ENCODE measurements at regions of chr4 and their contacts with region 1.

Region 1: GRCh38 chr4:88533937-88534750 is 10.6 kb upstream of the PYURF start:
- DNase-seq: no peak
- ATAC-seq: no peak
- H3K4me3 Mint-ChIP-seq: no peak overlapping the region
- H3K27ac Mint-ChIP-seq: no peak overlapping the region
- H3K4me1 Mint-ChIP-seq: peaks cover 8% of the 10 kb centered on the region
- H3K27me3 Mint-ChIP-seq: no peaks in the 10 kb centered on the region
- CTCF ChIP-seq: no peak

Region 2: GRCh38 chr4:88411473-88412096 is 122.6 kb before region 1 on chr4:
- CTCF ChIA-PET with region 1: no interaction called
- POLR2A ChIA-PET with region 1: no interaction called
- intact Hi-C with region 1: no loop called
- DNase-seq: peak; percentile 27
- ATAC-seq: peak; percentile 74
- H3K4me3 Mint-ChIP-seq: no peak overlapping the region
- H3K27ac Mint-ChIP-seq: no peak overlapping the region
- H3K4me1 Mint-ChIP-seq: peaks cover 7% of the 10 kb centered on the region
- H3K27me3 Mint-ChIP-seq: no peaks in the 10 kb centered on the region
- CTCF ChIP-seq: no peak

Region 3: DNA sequence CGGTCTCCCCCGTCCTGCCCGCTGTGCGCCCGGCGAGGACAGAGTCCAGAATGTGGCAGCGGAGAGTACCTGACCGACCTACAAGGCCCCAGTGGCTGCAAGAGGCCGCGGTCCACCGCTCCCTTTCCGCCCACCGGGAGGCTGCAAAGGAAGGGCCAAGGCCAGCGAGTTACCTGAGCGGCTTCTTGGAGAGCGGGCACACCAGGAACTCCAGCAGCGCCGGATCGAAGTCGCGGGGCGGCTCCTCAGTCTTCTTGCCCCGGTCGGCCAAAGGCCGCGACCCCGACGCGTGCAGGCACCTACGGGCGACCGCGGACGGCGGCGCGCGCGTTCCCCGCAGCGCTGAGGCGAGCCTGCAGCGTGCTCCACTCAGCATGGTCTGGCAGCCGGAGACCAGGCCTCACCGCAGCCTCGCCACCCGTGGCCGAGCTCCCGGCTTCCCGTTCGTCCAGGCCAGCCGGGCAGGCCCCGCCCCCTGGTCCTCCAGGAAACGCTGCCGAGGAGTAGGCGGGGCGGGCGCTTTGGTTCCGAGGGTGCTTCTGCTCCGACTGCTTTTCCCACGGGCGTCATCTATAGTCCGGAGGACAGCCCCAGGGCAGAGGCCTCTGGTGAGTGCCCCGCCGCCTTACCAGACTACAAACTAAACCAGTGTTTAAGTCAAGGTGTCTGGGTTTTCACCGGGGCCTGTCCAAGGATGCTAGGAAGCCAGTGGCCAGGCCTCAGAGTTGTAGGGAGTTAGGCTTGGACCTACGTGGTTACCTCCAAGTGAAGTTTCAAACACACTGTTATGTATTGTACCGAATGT is 10.6 kb before region 1 on chr4 and contains the start of gene PYURF:
- CTCF ChIA-PET with region 1: interaction called, 58 read pairs
- POLR2A ChIA-PET with region 1: no interaction called
- intact Hi-C with region 1: no loop called
- DNase-seq: peak; percentile 84
- ATAC-seq: peak; percentile 81
- H3K4me3 Mint-ChIP-seq: peak within 1 kb of the TSS; percentile 90
- H3K27ac Mint-ChIP-seq: peak within 1 kb of the TSS; percentile 89
- H3K4me1 Mint-ChIP-seq: peaks cover 35% of the 10 kb centered on the region
- H3K27me3 Mint-ChIP-seq: no peaks in the 10 kb centered on the region
- CTCF ChIP-seq: no peak
- total RNA-seq, gene PYURF: 47.4 to 50.7 TPM

Region 4: DNA sequence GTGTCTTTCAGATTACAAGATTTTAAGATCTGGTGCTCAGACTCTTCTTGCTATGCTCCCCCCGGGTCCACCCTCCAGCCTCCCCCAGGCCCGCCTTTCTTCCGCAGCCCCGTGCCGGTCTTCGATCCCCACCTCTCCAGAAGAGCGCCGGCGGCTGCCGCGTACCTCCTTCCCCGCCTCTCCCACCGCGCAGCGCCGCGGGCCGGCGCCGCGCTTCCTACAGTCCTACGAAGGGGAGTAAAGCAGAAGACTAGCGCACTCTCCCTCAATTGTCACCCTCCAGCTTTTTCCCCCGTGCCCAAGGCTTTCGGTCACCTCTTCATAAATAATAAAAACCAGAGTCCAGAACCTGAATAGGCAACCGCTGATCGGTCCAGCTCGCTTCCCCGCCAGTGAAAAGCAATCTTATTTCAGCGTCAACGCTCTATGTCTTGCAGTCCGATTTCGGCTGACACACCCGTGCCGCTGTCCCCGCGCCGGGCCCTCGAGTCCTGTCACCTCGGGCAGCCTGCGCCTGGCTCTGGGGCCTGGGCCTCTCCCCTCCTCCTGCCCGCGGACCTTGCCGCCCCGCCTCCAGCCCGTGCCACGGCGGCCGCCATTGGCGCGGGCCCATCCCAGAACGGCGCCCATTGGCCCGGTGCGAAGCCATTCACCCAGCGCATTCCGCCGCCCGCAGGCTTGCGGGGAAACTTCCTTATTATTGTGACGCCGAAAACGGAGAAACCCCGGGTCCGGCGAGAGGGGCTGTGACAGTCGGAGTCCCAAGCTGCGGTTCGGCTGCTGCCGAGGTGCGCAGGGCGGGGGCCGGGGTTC is 57.8 kb after region 1 on chr4 and contains the start of gene HERC3:
- CTCF ChIA-PET with region 1: interaction called, 14 read pairs
- POLR2A ChIA-PET with region 1: no interaction called
- intact Hi-C with region 1: no loop called
- DNase-seq: peak; percentile 87
- ATAC-seq: peak; percentile 87
- H3K4me3 Mint-ChIP-seq: peak within 1 kb of the TSS; percentile 84
- H3K27ac Mint-ChIP-seq: peak within 1 kb of the TSS; percentile 80
- H3K4me1 Mint-ChIP-seq: peaks cover 38% of the 10 kb centered on the region
- H3K27me3 Mint-ChIP-seq: peaks cover 2% of the 10 kb centered on the region
- CTCF ChIP-seq: no peak
- total RNA-seq, gene HERC3: 59.7 to 66.4 TPM

Region 5: GRCh38 chr4:88653371-88653946 is 119.3 kb after region 1 on chr4:
- CTCF ChIA-PET with region 1: interaction called, 35 read pairs
- POLR2A ChIA-PET with region 1: no interaction called
- intact Hi-C with region 1: loop called (anchors 2 kb)
- DNase-seq: no peak
- ATAC-seq: no peak
- H3K4me3 Mint-ChIP-seq: no peak overlapping the region
- H3K27ac Mint-ChIP-seq: peak overlapping the region; percentile 22
- H3K4me1 Mint-ChIP-seq: peaks cover 27% of the 10 kb centered on the region
- H3K27me3 Mint-ChIP-seq: no peaks in the 10 kb centered on the region
- CTCF ChIP-seq: no peak

Region 6: DNA sequence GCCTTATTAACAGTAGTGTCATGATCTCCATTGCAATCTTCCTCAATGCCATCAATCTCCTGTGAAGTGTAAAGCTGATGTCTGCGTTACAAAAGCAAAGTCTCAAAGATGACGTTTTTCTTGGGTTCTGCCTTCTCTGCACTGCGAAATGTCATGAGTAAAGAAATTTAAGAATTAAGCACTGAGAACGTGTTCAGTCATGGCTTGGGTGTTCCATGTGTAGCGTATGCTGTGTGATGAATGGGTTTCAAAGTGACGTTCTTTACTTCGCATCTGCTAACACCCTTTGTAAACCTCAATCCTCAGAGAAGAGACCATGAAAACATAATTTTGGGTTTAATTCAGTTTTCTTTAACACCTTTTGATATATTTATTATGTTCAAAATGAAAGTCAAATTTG is 162.5 kb after region 1 on chr4:
- CTCF ChIA-PET with region 1: interaction called, 10 read pairs
- POLR2A ChIA-PET with region 1: no interaction called
- intact Hi-C with region 1: no loop called
- DNase-seq: no peak
- ATAC-seq: no peak
- H3K4me3 Mint-ChIP-seq: peak overlapping the region; percentile 80
- H3K27ac Mint-ChIP-seq: peak overlapping the region; percentile 73
- H3K4me1 Mint-ChIP-seq: peaks cover 10% of the 10 kb centered on the region
- H3K27me3 Mint-ChIP-seq: no peaks in the 10 kb centered on the region
- CTCF ChIP-seq: no peak

Region 7: GRCh38 chr4:89024051-89024675 is 490.0 kb after region 1 on chr4:
- CTCF ChIA-PET with region 1: interaction called, 31 read pairs
- POLR2A ChIA-PET with region 1: no interaction called
- intact Hi-C with region 1: loop called (anchors 5 kb)
- DNase-seq: peak; percentile 63
- ATAC-seq: peak; percentile 96
- H3K4me3 Mint-ChIP-seq: no peak overlapping the region
- H3K27ac Mint-ChIP-seq: no peak overlapping the region
- H3K4me1 Mint-ChIP-seq: no peaks in the 10 kb centered on the region
- H3K27me3 Mint-ChIP-seq: peaks cover 2% of the 10 kb centered on the region
- CTCF ChIP-seq: peak; percentile 65

Measured in activated CD8-positive, alpha-beta T cell treated with anti-CD3 and anti-CD28 coated beads for 36 hours (primary cell).